Mammary epithelial cell (primary cell): ENCODE measurements at regions of chr2 and their contacts with region 1.

Region 1: GRCh38 chr2:74690571-74690970 is 36.5 kb downstream of the SEMA4F start:
- DNase-seq: peak; percentile 61
- H3K4me3 ChIP-seq: no peak overlapping the region
- H3K27ac ChIP-seq: no peak overlapping the region
- H3K4me1 ChIP-seq: peaks cover 27% of the 10 kb centered on the region
- H3K27me3 ChIP-seq: no peaks in the 10 kb centered on the region
- CTCF ChIP-seq: peak; percentile 86 to 88

Region 2: GRCh38 chr2:74421221-74421870 is 269.2 kb before region 1 on chr2 and contains the starts of genes C2orf81 and WDR54:
- CTCF ChIA-PET with region 1: no interaction called
- dilution Hi-C with region 1: no loop called
- in situ Hi-C with region 1: no loop called
- intact Hi-C with region 1: no loop called
- DNase-seq: peak; percentile 91
- H3K4me3 ChIP-seq: peak within 1 kb of the TSS; percentile 55 to 84 (median 70)
- H3K27ac ChIP-seq: peak within 1 kb of the TSS; percentile 96
- H3K4me1 ChIP-seq: peaks cover 40% of the 10 kb centered on the region
- H3K27me3 ChIP-seq: no peaks in the 10 kb centered on the region
- CTCF ChIP-seq: no peak
- total RNA-seq, gene C2orf81: 2.5 to 9.5 TPM
- total RNA-seq, gene WDR54: 39.0 to 50.4 TPM

Region 3: DNA sequence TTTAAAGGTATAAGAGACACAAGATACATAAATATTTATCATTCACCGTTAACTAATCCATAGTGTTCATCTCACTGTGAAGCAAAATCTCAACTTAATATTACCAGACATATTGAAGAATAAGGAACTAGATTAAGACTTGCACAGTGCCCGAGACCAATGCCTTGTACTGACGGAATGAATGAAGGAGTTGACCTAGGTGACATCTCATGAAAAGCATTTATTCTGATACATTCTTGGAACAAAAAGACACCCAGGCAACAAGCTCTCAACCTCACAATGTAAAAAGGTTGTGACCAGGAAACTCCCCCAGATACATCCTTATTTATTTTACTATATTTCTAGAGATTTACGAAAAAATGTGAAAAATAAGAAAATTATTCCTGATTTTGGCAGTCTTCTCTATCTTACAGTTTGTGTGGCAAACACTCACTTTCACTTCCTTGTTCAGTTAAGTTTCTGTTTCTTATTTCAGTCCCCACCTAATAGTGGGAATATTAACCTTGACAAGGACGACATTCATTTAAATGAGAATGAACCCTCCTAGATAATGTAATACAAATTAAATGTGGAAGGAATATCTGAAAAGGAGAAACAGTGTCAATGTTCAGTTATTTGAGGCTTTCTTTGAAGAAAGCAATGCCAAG is 70.8 kb before region 1 on chr2:
- CTCF ChIA-PET with region 1: no interaction called
- dilution Hi-C with region 1: loop called (anchors 5 kb)
- in situ Hi-C with region 1: no loop called
- intact Hi-C with region 1: no loop called
- DNase-seq: no peak
- H3K4me3 ChIP-seq: no peak overlapping the region
- H3K27ac ChIP-seq: no peak overlapping the region
- H3K4me1 ChIP-seq: no peaks in the 10 kb centered on the region
- H3K27me3 ChIP-seq: peaks cover 4% of the 10 kb centered on the region
- CTCF ChIP-seq: no peak

Region 4: GRCh38 chr2:74806920-74807319 is 116.3 kb after region 1 on chr2:
- CTCF ChIA-PET with region 1: no interaction called
- dilution Hi-C with region 1: no loop called
- in situ Hi-C with region 1: no loop called
- intact Hi-C with region 1: no loop called
- DNase-seq: no peak
- H3K4me3 ChIP-seq: no peak overlapping the region
- H3K27ac ChIP-seq: no peak overlapping the region
- H3K4me1 ChIP-seq: no peaks in the 10 kb centered on the region
- H3K27me3 ChIP-seq: no peaks in the 10 kb centered on the region
- CTCF ChIP-seq: no peak

Region 5: GRCh38 chr2:74833418-74834233 is 143.1 kb after region 1 on chr2 and contains the start of gene HK2:
- CTCF ChIA-PET with region 1: no interaction called
- dilution Hi-C with region 1: no loop called
- in situ Hi-C with region 1: no loop called
- intact Hi-C with region 1: loop called (anchors 1 kb)
- DNase-seq: peak; percentile 89
- H3K4me3 ChIP-seq: peak within 1 kb of the TSS; percentile 61 to 93 (median 92)
- H3K27ac ChIP-seq: peak within 1 kb of the TSS; percentile 74
- H3K4me1 ChIP-seq: peaks cover 27% of the 10 kb centered on the region
- H3K27me3 ChIP-seq: no peaks in the 10 kb centered on the region
- CTCF ChIP-seq: no peak
- total RNA-seq, gene HK2: 13.0 to 56.1 TPM

Region 6: DNA sequence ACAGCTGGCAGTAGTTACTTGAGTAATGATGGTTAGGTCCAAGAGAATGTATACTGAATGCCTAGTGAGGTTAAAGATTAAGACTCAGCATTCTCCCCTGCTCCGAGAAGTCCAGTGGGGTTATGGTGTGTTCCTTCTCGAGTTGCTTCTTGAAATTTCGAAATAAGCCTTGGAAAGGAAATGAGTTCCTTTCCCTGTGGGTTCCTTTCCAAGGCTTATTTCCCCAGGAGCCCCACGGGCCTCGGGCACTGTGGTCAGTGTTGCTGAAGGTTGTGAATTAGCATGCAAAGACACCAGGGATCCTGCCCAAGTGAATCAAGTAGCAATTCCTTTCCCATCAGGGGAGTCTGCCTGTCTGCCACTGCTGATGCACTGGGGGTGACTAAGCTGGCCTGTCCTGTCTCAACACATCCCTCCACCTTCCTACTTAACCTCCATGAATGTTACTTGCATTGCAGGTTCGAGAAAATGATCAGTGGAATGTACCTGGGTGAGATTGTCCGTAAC is 196.9 kb after region 1 on chr2:
- CTCF ChIA-PET with region 1: interaction called, 3 read pairs
- dilution Hi-C with region 1: loop called (anchors 5 kb)
- in situ Hi-C with region 1: no loop called
- intact Hi-C with region 1: no loop called
- DNase-seq: peak; percentile 93
- H3K4me3 ChIP-seq: peak overlapping the region in 1 of 3 experiments; percentile 3
- H3K27ac ChIP-seq: peak overlapping the region; percentile 69
- H3K4me1 ChIP-seq: peaks cover 39% of the 10 kb centered on the region
- H3K27me3 ChIP-seq: no peaks in the 10 kb centered on the region
- CTCF ChIP-seq: no peak

Region 7: GRCh38 chr2:74935975-74936391 is 245.4 kb after region 1 on chr2:
- CTCF ChIA-PET with region 1: no interaction called
- dilution Hi-C with region 1: no loop called
- in situ Hi-C with region 1: no loop called
- intact Hi-C with region 1: no loop called
- DNase-seq: peak; percentile 90
- H3K4me3 ChIP-seq: no peak overlapping the region
- H3K27ac ChIP-seq: peak overlapping the region; percentile 85
- H3K4me1 ChIP-seq: peaks cover 21% of the 10 kb centered on the region
- H3K27me3 ChIP-seq: no peaks in the 10 kb centered on the region
- CTCF ChIP-seq: no peak

Region 8: GRCh38 chr2:75064691-75065396 is 374.3 kb after region 1 on chr2:
- CTCF ChIA-PET with region 1: no interaction called
- dilution Hi-C with region 1: no loop called
- in situ Hi-C with region 1: no loop called
- intact Hi-C with region 1: loop called (anchors 5 kb)
- DNase-seq: peak; percentile 38
- H3K4me3 ChIP-seq: no peak overlapping the region
- H3K27ac ChIP-seq: no peak overlapping the region
- H3K4me1 ChIP-seq: no peaks in the 10 kb centered on the region
- H3K27me3 ChIP-seq: no peaks in the 10 kb centered on the region
- CTCF ChIP-seq: peak; percentile 89 to 96

Region 9: GRCh38 chr2:75403991-75404428 is 713.4 kb after region 1 on chr2:
- CTCF ChIA-PET with region 1: no interaction called
- dilution Hi-C with region 1: no loop called
- in situ Hi-C with region 1: loop called in 1 of 2 experiments (anchors 25 kb)
- intact Hi-C with region 1: loop called (anchors 1 kb)
- DNase-seq: peak; percentile 35
- H3K4me3 ChIP-seq: no peak overlapping the region
- H3K27ac ChIP-seq: no peak overlapping the region
- H3K4me1 ChIP-seq: no peaks in the 10 kb centered on the region
- H3K27me3 ChIP-seq: peaks cover 3% of the 10 kb centered on the region
- CTCF ChIP-seq: peak; percentile 76 to 85